ENCODE measurements at regions of chr12 and their contacts with region 1.

Region 1: DNA sequence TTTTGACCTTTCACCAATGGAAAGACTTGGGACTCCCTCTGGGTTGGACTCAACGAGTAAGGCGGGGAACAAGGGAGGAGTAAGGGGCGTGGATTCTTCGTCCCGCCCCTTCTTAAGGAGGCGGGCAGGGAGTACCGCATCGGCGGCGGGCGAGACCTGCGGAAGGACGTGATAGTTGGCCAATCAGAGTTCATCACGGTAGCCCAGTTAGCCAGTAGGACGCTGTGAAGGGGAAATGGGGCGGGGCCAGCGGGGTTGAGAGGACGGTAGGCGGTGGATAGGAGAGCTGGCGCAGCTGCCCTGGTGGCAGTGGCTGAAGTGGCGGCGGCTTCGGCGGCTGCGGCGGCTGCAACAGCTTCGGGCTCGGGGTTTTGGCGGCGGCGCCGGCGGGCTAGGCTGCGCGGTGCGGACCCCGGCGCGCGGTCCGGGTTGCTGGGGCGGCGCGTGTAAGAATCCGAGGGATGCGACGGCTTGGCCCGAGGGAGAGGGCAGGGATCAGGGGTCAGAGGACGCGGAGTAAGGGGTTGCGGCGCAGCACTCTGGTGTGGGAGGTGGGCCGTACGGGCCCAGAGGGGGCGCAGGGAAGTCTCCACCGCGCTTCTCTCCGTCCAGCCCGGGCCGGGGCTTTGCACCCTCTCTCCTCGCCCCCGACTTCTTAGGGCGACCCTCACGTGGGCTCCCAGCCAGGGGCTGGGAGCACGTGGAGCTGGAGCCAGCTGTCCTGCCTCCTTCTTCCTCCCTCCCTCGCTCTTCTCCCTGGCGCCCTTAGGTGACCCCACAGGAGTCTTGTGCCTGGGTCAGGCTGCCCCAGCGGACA is at the start of gene TPCN1:
- DNase-seq: peak; percentile 100
- ATAC-seq: peak; percentile 96
- H3K4me3 Mint-ChIP-seq: peak within 1 kb of the TSS; percentile 95
- H3K27ac Mint-ChIP-seq: peak within 1 kb of the TSS; percentile 88
- H3K4me1 Mint-ChIP-seq: peaks cover 35% of the 10 kb centered on the region
- H3K27me3 Mint-ChIP-seq: no peaks in the 10 kb centered on the region
- CTCF ChIP-seq: no peak
- total RNA-seq, gene TPCN1: 29.9 to 33.5 TPM

Region 2: DNA sequence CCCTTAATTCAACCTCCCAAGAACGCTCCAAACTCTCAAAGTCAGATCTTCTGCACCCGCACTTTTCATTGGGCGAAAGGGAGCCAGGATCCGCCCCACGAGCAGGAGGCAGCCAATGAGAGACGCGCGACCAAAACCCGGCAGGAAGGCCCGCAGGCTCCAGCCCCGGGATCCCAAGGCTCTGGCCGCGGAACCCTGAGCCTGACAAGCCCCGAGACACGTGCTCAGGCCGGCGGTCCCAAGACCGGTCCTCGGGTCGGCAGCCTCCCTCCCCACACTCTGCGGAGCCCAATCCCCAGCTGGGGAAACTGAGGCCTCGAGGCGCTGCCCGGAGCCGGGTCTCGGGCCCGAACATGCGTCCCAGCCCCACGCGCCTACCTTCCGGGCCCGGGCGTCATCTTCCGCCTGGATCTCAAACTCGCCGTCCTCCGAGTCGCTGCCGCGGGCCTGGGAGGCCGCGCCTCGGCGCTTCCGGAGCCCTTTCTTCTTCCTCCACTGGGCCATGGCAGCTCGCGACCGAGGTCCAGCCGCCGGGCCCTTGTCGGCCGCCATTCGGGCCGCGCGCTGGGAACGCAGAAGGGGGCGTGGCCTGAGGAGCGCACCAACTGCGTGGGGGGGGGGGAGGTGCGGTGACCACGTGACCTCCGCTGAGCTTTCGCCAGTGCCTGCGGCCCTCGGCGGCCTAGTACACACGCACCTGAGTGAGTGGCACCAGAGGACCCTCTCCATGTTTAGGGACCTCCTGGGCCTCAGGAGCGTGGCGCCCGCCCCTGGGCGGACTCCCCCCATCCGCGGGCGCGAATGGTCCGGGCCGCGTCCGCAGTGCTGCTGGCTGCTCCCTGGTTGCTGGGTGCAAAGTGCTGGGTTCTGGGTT is 36.3 kb before region 1 on chr12 and contains the starts of genes DDX54 and RITA1:
- CTCF ChIA-PET with region 1: no interaction called
- POLR2A ChIA-PET with region 1: interaction called, 12 read pairs
- intact Hi-C with region 1: no loop called
- DNase-seq: peak; percentile 93
- ATAC-seq: peak; percentile 86
- H3K4me3 Mint-ChIP-seq: peak within 1 kb of the TSS; percentile 97
- H3K27ac Mint-ChIP-seq: peak within 1 kb of the TSS; percentile 97
- H3K4me1 Mint-ChIP-seq: peaks cover 36% of the 10 kb centered on the region
- H3K27me3 Mint-ChIP-seq: no peaks in the 10 kb centered on the region
- CTCF ChIP-seq: no peak
- total RNA-seq, gene DDX54: 112 to 133 TPM
- total RNA-seq, gene RITA1: 18.5 to 19.1 TPM

Region 3: DNA sequence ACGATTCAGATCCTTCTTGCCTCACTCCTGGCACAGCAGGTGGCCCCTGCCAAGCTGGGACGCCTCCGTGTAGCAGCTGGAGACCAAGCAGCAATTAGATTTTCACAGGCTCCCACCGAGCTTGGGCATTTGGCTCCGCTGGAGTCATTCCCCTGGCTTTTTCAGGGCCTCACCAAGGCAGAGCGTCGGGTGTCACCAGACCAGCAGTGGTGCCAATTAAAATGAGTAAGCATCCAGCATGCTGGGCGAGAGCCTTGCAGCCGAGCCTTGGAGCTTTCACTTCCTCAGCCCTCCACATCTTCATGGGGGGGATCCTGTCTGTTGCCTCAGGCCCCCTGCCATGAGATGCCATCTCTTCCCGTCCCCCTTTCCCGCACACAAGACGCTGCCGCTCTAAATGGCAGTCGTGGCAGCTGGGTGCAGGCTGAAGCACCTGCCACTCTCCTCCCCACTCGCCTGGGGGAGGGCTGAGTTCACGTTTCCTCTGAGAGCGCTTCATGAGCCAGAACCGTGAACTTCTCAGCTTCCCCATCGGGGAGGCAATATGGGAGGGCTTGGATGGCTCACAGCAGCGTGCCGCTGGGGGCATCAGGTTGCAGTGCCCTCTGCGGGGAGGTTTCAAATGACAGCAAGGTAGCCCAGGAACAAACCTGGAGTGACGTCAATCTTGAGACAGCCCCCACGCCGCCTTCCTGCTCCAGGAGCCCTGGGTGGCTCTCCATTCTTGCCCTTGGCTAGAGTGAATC is 11.6 kb after region 1 on chr12:
- CTCF ChIA-PET with region 1: interaction called, 23 read pairs
- POLR2A ChIA-PET with region 1: interaction called, 21 read pairs
- intact Hi-C with region 1: no loop called
- DNase-seq: peak; percentile 83
- ATAC-seq: peak; percentile 88
- H3K4me3 Mint-ChIP-seq: peak overlapping the region; percentile 59
- H3K27ac Mint-ChIP-seq: peak overlapping the region; percentile 80
- H3K4me1 Mint-ChIP-seq: peaks cover 44% of the 10 kb centered on the region
- H3K27me3 Mint-ChIP-seq: no peaks in the 10 kb centered on the region
- CTCF ChIP-seq: peak; percentile 33

Measured in activated CD8-positive, alpha-beta T cell treated with anti-CD3 and anti-CD28 coated beads for 36 hours (primary cell).